ENCODE measurements at regions of chr4 and their contacts with region 1.

Region 1: GRCh38 chr4:11650801-11651596 is 222.3 kb upstream of the HS3ST1 start:
- DNase-seq: peak; percentile 60
- H3K4me3 Mint-ChIP-seq: peak overlapping the region; percentile 64
- H3K27ac Mint-ChIP-seq: peak overlapping the region; percentile 92
- H3K4me1 Mint-ChIP-seq: peaks cover 32% of the 10 kb centered on the region
- H3K27me3 Mint-ChIP-seq: no peaks in the 10 kb centered on the region
- CTCF ChIP-seq: no peak

Region 2: DNA sequence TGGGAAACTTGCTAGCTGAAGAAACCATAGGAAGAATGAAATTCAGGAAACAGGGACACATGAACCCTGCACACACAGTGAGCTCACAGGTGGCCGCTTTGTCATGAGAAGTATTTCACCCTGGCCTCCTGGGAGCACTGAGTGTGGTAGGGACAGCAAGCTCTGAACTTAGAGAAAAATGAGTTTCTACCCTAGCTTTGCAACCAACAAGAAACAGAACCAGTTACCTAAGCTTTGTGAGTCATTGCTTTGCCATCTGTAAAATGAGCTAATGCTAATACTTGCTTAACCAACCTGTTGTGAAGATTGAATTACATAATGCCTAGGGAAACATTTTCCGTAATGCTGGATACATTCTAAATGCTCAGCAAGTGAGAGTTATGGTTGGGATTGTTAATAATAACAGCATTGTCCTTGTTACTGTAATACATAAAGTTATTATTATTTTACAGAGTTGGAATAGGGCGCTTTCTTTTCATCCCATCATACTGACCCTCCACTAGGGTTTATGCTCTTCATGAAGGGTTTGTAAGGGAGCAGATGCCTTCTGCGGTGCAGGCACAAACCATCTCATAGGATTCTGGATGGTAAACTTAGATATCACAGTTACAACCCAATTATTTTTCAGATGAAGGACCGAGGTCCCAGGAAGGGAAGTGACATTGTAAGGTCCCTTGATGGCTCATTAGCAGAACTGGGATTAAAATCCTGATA is 15.5 kb before region 1 on chr4:
- CTCF ChIA-PET with region 1: interaction called, 10 read pairs
- intact Hi-C with region 1: no loop called
- DNase-seq: peak; percentile 56
- H3K4me3 Mint-ChIP-seq: no peak overlapping the region
- H3K27ac Mint-ChIP-seq: peak overlapping the region; percentile 98
- H3K4me1 Mint-ChIP-seq: peaks cover 66% of the 10 kb centered on the region
- H3K27me3 Mint-ChIP-seq: no peaks in the 10 kb centered on the region
- CTCF ChIP-seq: no peak

Region 3: DNA sequence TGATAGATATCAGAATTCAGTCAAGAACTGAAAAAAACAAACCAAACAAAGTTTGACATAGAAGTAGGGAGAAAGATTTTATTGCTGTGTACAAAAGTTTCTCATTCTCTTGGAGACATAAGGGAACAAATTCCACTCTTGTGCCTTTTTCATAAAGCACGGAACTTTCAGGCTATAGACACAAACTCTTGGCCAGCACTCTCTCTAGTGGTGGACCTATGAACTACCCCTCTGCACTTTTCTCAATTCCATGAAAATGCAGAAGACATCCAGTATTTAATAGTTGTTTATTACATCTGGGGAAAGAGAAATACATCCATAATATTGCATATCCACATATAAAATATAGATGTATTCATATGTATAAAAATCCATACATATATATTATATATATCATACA is 69.3 kb after region 1 on chr4:
- CTCF ChIA-PET with region 1: interaction called, 4 read pairs
- intact Hi-C with region 1: loop called (anchors 1 kb)
- DNase-seq: peak; percentile 40
- H3K4me3 Mint-ChIP-seq: no peak overlapping the region
- H3K27ac Mint-ChIP-seq: peak overlapping the region; percentile 70
- H3K4me1 Mint-ChIP-seq: peaks cover 32% of the 10 kb centered on the region
- H3K27me3 Mint-ChIP-seq: no peaks in the 10 kb centered on the region
- CTCF ChIP-seq: peak; percentile 48

Region 4: DNA sequence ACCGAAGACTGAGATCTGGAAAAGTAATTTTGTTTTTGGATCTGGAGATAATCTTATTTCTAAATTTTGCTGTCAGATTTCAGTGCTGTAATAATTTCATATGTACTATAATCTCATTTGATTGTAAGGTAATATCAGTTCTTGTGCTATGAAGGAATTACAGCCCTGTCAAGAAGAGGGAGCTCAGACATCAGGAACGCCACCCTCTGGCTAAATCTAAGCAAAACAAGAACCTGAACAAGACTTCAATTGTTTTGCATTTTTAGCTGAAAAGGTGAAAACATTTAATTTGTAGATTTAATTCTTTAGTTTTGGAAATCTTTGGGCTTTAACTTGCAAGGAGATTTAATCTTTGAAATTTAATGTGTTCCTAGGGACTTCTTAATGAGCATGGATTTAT is 303.1 kb after region 1 on chr4:
- CTCF ChIA-PET with region 1: no interaction called
- intact Hi-C with region 1: loop called (anchors 2 kb)
- DNase-seq: peak; percentile 22
- H3K4me3 Mint-ChIP-seq: no peak overlapping the region
- H3K27ac Mint-ChIP-seq: no peak overlapping the region
- H3K4me1 Mint-ChIP-seq: peaks cover 6% of the 10 kb centered on the region
- H3K27me3 Mint-ChIP-seq: no peaks in the 10 kb centered on the region
- CTCF ChIP-seq: peak; percentile 28

Measured in Calu3 (cell line).